ENCODE measurements at regions of chr5 and their contacts with region 1.

Region 1: GRCh38 chr5:106454651-106455415 is 1215.9 kb downstream of the EFNA5 start:
- DNase-seq: peak; percentile 29 to 53
- H3K4me3 ChIP-seq: no peak overlapping the region
- H3K27ac ChIP-seq: no peak overlapping the region
- H3K4me1 ChIP-seq: no peaks in the 10 kb centered on the region
- H3K27me3 ChIP-seq: no peaks in the 10 kb centered on the region
- CTCF ChIP-seq: peak in 2 of 3 experiments; percentile 69 to 87; a peak in 3 of 4 replicates
- EP300 ChIP-seq: no peak
- POLR2A ChIP-seq: no peak
- RAD21 ChIP-seq: peak; percentile 76 to 82

Region 2: DNA sequence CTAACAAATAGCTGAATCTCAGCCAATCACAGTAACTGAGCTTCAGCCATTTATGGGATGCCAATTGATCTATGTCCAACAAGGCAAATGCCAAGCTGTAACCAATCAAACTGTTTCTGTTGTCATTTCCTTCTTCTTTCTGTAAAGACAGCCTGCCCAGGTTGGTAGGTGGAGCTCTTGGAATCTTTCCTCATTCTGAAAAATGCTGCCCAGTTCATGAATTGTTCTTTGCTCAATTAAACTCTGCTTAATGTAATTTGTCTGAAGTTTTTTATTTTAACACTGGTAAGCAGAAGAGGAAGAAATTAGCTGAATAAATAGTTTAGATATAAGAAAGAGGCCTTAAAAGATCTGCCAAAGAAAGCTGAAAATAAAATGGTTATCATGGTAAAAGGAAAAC is 19.6 kb before region 1 on chr5:
- CTCF ChIA-PET with region 1: interaction called, 18 read pairs
- POLR2A ChIA-PET with region 1: no interaction called
- DNase-seq: no peak
- H3K4me3 ChIP-seq: no peak overlapping the region
- H3K27ac ChIP-seq: no peak overlapping the region
- H3K4me1 ChIP-seq: no peaks in the 10 kb centered on the region
- H3K27me3 ChIP-seq: no peaks in the 10 kb centered on the region
- CTCF ChIP-seq: no peak
- EP300 ChIP-seq: no peak
- POLR2A ChIP-seq: no peak
- RAD21 ChIP-seq: no peak

Region 3: GRCh38 chr5:106443746-106444145 is 11.1 kb before region 1 on chr5:
- CTCF ChIA-PET with region 1: interaction called, 28 read pairs
- POLR2A ChIA-PET with region 1: no interaction called
- DNase-seq: no peak
- H3K4me3 ChIP-seq: no peak overlapping the region
- H3K27ac ChIP-seq: no peak overlapping the region
- H3K4me1 ChIP-seq: no peaks in the 10 kb centered on the region
- H3K27me3 ChIP-seq: no peaks in the 10 kb centered on the region
- CTCF ChIP-seq: no peak
- EP300 ChIP-seq: no peak
- POLR2A ChIP-seq: no peak
- RAD21 ChIP-seq: no peak

Region 4: DNA sequence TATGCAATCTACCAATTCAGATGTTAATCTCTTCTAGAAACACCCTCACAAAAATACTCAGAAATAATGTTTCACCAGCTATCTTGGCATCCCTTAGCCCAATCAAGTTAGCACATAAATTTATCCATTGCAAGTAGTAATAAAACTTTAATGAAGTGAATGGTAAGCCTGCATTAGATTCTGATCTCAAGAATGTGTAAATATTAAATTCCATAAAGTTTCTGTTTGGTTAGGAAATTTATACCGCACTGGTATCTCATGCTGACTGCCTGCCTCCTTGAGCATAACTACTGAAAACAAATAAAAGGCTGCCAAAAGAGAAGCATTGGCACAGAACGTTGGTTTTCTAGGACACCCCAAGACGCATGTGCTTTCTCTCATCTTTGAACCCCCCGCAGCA is 10.6 kb after region 1 on chr5:
- CTCF ChIA-PET with region 1: interaction called, 21 read pairs
- POLR2A ChIA-PET with region 1: no interaction called
- DNase-seq: no peak
- H3K4me3 ChIP-seq: no peak overlapping the region
- H3K27ac ChIP-seq: no peak overlapping the region
- H3K4me1 ChIP-seq: no peaks in the 10 kb centered on the region
- H3K27me3 ChIP-seq: no peaks in the 10 kb centered on the region
- CTCF ChIP-seq: no peak
- EP300 ChIP-seq: no peak
- POLR2A ChIP-seq: no peak
- RAD21 ChIP-seq: no peak

Region 5: DNA sequence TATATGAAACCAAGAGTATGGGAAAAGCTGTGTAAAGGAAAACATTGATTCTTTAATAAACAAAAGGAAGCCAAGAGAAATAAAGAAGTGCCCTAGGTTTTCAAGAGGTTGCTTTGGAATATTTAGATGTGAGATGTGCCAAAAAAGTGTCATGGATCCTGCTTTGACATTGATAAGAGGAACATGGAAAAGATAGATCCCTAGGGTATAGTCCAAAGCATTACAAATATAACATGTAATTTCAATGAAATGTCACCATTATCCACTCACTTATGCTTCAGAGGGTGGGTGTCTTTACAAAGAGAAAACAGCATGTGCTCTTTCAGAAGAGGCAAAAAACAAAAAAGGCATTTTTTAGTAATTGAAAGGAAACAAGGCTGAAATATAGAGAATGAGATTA is 19.2 kb after region 1 on chr5:
- CTCF ChIA-PET with region 1: interaction called, 16 read pairs
- POLR2A ChIA-PET with region 1: no interaction called
- DNase-seq: no peak
- H3K4me3 ChIP-seq: no peak overlapping the region
- H3K27ac ChIP-seq: no peak overlapping the region
- H3K4me1 ChIP-seq: no peaks in the 10 kb centered on the region
- H3K27me3 ChIP-seq: no peaks in the 10 kb centered on the region
- CTCF ChIP-seq: no peak
- EP300 ChIP-seq: no peak
- POLR2A ChIP-seq: no peak
- RAD21 ChIP-seq: no peak